Activated T-helper 2 cell treated with anti-CD3 and anti-CD28 coated beads, Interferon-gamma antibody, Interleukin-2, Interleukin-4, amounts not matched to agents 10 μg/mL and 5 μg/mL and 100 μg/mL, durations not matched to agents 14 hours and 24 hours and 36 hours (primary cell): ENCODE measurements at regions of chr7 and their contacts with region 1.

Region 1: DNA sequence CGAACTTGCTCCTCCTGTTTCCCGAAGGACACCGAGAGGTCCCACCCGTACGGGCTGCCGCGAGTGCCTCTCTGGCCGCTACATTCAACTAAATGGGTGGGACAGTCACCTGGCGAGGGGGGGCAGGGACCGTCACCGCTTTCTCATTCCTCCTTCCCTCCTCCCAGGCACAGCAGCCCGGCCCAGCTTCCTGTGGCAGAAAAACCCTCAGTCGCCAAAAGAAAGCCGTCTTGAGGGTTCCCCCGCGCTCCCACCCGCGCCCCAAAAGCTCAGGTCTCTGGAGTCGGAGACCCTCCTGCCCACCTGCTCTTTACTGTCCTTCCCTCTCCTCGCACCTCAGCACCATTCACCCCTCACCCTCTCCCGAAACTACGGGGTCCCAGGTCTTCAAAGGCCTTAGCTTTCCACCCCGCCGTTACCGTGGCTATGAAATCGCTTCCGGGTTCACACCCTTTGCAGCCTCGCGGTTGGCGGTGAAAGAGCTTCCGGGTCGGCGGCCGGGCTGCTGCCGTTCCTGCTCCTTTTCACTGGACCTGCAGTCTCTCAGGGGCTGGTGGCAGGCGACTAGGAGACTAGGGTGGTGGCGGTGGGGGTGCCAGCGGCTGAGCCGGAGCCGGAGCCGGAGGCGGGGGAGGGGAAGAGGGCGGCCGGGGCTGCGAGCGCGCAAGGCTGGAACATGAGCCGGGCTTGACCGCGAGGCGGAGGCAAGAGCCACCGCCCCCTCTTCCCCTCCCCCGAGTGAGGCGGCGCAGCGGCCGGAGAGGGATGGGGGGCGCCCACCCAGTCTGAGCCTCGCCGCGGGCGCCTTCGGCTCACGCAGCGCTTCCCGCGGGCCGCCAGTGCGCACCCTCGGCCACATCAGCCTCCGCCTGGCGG is at the starts of genes ANKIB1 and KRIT1:
- DNase-seq: peak; percentile 83
- H3K4me3 Mint-ChIP-seq: peak within 1 kb of the TSS; percentile 100
- H3K27ac Mint-ChIP-seq: peak within 1 kb of the TSS; percentile 100
- H3K4me1 Mint-ChIP-seq: peaks cover 30% of the 10 kb centered on the region
- H3K27me3 Mint-ChIP-seq: no peaks in the 10 kb centered on the region
- total RNA-seq, gene ANKIB1: 50.4 and 55.0 TPM in 2 replicates
- total RNA-seq, gene KRIT1: 37.4 and 43.0 TPM in 2 replicates

Region 2: GRCh38 chr7:91940572-91941341 is 305.0 kb before region 1 on chr7 and contains the start of gene AKAP9:
- intact Hi-C with region 1: loop called (anchors 1 kb)
- DNase-seq: peak; percentile 87
- H3K4me3 Mint-ChIP-seq: peak within 1 kb of the TSS; percentile 88
- H3K27ac Mint-ChIP-seq: peak within 1 kb of the TSS; percentile 93
- H3K4me1 Mint-ChIP-seq: peaks cover 28% of the 10 kb centered on the region
- H3K27me3 Mint-ChIP-seq: peaks cover 6% of the 10 kb centered on the region
- total RNA-seq, gene AKAP9: 36.2 and 38.3 TPM in 2 replicates

Region 3: DNA sequence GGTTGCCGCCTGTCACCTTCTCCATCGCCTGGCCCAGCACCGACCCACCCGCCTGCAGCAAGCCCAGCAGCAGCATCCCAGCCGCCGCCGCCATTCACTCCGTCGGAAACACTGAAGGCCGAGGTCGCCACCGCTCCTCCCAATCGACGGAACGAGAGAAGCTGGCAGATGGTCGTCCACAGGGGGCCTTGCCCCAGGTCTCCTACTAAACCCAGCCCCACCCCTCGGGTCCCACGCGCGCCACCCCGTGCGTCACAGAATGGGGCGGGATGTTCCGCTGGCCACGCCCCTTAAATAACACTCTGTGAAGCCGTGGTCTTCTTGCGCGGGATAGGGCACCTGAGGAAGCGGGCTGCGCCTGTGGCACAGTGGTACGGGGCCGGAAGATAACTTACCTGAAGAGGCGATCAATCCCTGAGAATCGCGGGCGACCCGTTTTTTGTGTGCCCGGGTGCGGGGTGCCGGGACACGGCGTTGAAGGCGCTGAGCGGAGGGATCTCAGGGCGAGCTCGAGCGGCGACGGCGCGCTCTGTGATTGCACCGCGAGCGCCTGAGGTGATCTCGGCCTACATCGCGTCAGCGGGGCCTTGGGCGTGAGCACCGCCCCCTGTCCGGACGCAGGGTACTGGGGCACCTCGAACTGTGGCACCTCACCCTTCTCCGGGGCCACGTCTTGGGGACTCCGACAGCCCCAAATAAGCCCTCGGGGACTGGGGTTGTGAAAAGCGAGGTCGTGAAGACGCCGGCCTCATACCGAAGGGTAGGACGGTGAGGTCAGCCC is 111.3 kb before region 1 on chr7 and contains the start of gene CYP51A1:
- intact Hi-C with region 1: loop called (anchors 1 kb)
- DNase-seq: peak; percentile 92
- H3K4me3 Mint-ChIP-seq: peak within 1 kb of the TSS; percentile 99
- H3K27ac Mint-ChIP-seq: peak within 1 kb of the TSS; percentile 99
- H3K4me1 Mint-ChIP-seq: peaks cover 41% of the 10 kb centered on the region
- H3K27me3 Mint-ChIP-seq: no peaks in the 10 kb centered on the region
- total RNA-seq, gene CYP51A1: 133 and 139 TPM in 2 replicates

Region 4: GRCh38 chr7:92178927-92179924 is 66.5 kb before region 1 on chr7 and contains the start of gene LRRD1:
- intact Hi-C with region 1: loop called (anchors 2 kb)
- DNase-seq: peak; percentile 85
- H3K4me3 Mint-ChIP-seq: peak within 1 kb of the TSS; percentile 69
- H3K27ac Mint-ChIP-seq: no peak within 1 kb of the TSS
- H3K4me1 Mint-ChIP-seq: peaks cover 9% of the 10 kb centered on the region
- H3K27me3 Mint-ChIP-seq: peaks cover 27% of the 10 kb centered on the region
- total RNA-seq, gene LRRD1: 0.09 TPM in 1 of 2 replicates, not detected in the other

Region 5: GRCh38 chr7:92391071-92391470 is 145.3 kb after region 1 on chr7:
- intact Hi-C with region 1: no loop called
- DNase-seq: no peak
- H3K4me3 Mint-ChIP-seq: no peak overlapping the region
- H3K27ac Mint-ChIP-seq: no peak overlapping the region
- H3K4me1 Mint-ChIP-seq: no peaks in the 10 kb centered on the region
- H3K27me3 Mint-ChIP-seq: no peaks in the 10 kb centered on the region

Region 6: DNA sequence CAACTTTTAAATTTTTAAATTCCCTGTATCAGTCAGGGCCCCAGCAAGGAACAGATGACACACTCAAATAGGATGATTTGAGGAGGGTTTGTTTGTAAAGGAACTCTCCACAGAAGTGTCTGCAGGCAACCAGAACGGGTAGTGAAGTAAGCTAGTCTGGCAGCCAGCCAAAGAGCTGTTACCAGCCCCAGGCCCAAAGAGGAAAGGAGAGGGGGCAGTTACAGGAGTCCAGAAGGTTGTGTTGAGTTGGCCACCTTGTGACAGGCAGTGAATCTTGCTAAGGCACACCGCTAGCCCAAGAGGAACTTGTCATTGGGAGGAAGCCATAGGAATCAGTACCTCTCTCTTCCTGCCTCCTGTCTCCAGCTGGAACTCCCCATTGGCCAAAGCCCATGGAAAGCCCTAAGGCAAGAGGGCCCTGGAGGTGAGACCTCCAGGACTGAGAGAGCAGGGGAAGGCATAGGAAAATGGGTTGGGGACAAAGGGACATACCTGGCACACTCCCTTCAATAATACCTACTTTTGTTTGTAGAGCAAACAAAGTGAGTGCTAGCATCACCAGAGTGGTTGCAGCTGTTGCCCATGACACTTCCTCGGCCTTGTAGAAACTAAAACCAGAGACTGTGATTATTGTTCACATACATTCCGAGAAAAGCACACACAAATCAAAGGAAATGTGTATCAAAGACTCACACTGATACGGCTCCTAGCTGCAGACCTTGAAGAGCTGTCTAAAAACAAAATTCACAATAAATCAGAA is 176.1 kb after region 1 on chr7:
- intact Hi-C with region 1: loop called (anchors 5 kb)
- DNase-seq: no peak
- H3K4me3 Mint-ChIP-seq: no peak overlapping the region
- H3K27ac Mint-ChIP-seq: no peak overlapping the region
- H3K4me1 Mint-ChIP-seq: peaks cover 14% of the 10 kb centered on the region
- H3K27me3 Mint-ChIP-seq: peaks cover 4% of the 10 kb centered on the region